ENCODE measurements at regions of chr11 and their contacts with region 1.

Region 1: GRCh38 chr11:78564490-78565467 is 9.9 kb downstream of the NARS2 start:
- DNase-seq: peak; percentile 31
- H3K4me3 Mint-ChIP-seq: no peak overlapping the region
- H3K27ac Mint-ChIP-seq: peak overlapping the region; percentile 81
- H3K4me1 Mint-ChIP-seq: peaks cover 50% of the 10 kb centered on the region
- H3K27me3 Mint-ChIP-seq: no peaks in the 10 kb centered on the region

Region 2: DNA sequence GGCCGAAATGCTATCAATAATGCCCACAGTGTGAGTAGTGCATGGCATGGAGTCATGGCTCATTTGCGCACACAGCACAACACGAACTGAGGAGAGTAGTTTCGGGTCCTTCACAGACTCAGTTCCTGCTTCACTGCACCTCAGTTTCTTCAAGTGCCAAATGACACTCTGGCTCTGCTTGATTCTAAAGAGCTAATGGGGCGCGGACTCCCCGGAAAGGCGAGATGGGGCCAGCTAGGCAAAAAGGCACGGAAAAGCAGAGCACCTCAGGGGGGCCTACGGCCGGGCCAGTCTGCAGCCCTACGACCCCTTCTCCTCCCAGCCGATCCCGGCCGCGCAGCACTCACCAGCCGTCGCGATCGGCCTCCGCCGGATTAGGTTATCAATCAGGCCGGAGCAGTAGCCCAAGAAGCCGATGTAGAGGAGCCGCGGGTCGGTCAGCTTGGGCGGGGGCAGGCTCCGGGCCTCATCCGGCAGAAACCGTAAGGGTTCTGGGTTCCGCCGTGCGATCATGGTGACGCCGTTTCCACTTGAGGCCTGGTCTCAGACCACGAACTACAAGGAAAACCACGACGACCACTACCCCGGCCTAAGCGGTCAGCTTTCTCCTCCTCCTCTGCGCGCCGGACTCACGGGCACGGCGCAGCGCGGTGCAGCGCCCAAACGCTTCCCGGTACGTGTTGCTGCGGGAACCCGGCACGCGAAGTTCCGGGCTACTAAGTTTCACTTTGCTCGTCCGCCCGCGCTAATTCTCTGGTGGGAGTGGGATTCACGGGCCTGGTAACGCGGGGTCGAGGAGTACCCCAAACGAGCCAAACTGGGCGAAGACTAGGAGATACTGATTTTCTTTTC is 485.3 kb before region 1 on chr11 and contains the start of gene NDUFC2:
- intact Hi-C with region 1: loop called (anchors 10 kb)
- DNase-seq: peak; percentile 62
- H3K4me3 Mint-ChIP-seq: peak within 1 kb of the TSS; percentile 95
- H3K27ac Mint-ChIP-seq: peak within 1 kb of the TSS; percentile 86
- H3K4me1 Mint-ChIP-seq: peaks cover 53% of the 10 kb centered on the region
- H3K27me3 Mint-ChIP-seq: no peaks in the 10 kb centered on the region
- total RNA-seq, gene NDUFC2: 208 and 220 TPM in 2 replicates

Region 3: GRCh38 chr11:78139422-78140391 is 425.1 kb before region 1 on chr11 and contains the start of gene ALG8:
- intact Hi-C with region 1: loop called (anchors 2 kb)
- DNase-seq: peak; percentile 96
- H3K4me3 Mint-ChIP-seq: peak within 1 kb of the TSS; percentile 95
- H3K27ac Mint-ChIP-seq: peak within 1 kb of the TSS; percentile 90
- H3K4me1 Mint-ChIP-seq: peaks cover 43% of the 10 kb centered on the region
- H3K27me3 Mint-ChIP-seq: no peaks in the 10 kb centered on the region
- total RNA-seq, gene ALG8: 57.9 and 74.2 TPM in 2 replicates

Region 4: DNA sequence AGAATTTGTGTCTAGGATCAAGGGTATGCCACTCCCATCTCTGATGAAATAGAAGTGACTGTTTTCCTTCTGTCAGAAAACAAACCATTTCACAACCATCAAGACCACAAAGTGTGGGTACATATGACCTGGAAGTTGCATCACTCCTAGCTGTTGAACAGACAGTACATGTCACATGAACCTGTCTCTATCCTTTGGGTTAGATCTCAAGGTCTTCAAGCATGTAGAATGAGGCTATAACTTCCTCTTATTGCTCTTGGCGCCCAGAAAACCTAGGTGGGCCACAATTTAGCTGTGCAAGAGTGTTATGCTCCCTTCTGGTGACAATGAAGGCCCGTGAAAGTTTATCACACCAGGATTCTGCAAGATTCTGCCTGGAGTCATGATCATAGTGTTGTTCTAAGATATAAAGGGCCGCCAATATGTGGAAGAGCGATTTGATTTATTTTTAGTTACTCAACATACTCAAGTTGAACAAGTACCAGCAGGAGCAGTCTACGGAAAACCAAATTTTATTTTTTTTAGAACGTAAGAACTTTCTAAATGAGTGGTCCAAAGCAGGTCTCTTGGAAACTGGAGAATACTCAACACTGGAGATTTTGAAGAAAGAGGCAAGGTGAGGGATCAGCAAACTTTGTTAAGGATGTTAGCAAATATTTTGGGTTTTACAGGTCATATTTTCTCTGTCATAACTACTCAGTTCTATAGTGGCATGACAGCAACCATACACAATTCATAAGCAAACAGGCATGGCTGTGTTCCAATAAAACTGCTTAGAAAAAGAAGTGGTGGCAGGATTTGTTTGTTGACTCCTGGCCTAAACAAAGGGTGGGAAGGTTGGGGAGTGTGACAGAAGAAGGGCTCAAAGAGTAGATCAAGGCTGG is 274.2 kb before region 1 on chr11:
- intact Hi-C with region 1: loop called (anchors 5 kb)
- DNase-seq: peak; percentile 54
- H3K4me3 Mint-ChIP-seq: peak overlapping the region; percentile 73
- H3K27ac Mint-ChIP-seq: peak overlapping the region; percentile 92
- H3K4me1 Mint-ChIP-seq: peaks cover 68% of the 10 kb centered on the region
- H3K27me3 Mint-ChIP-seq: no peaks in the 10 kb centered on the region

Region 5: GRCh38 chr11:78350646-78351165 is 214.1 kb before region 1 on chr11:
- intact Hi-C with region 1: loop called (anchors 5 kb)
- DNase-seq: no peak
- H3K4me3 Mint-ChIP-seq: peak overlapping the region; percentile 60
- H3K27ac Mint-ChIP-seq: peak overlapping the region; percentile 92
- H3K4me1 Mint-ChIP-seq: peaks cover 75% of the 10 kb centered on the region
- H3K27me3 Mint-ChIP-seq: peaks cover 5% of the 10 kb centered on the region

Region 6: GRCh38 chr11:78476066-78476465 is 88.7 kb before region 1 on chr11:
- intact Hi-C with region 1: no loop called
- DNase-seq: no peak
- H3K4me3 Mint-ChIP-seq: no peak overlapping the region
- H3K27ac Mint-ChIP-seq: no peak overlapping the region
- H3K4me1 Mint-ChIP-seq: no peaks in the 10 kb centered on the region
- H3K27me3 Mint-ChIP-seq: no peaks in the 10 kb centered on the region

Region 7: GRCh38 chr11:78586452-78587046 is 21.8 kb after region 1 on chr11:
- intact Hi-C with region 1: no loop called
- DNase-seq: no peak
- H3K4me3 Mint-ChIP-seq: no peak overlapping the region
- H3K27ac Mint-ChIP-seq: no peak overlapping the region
- H3K4me1 Mint-ChIP-seq: no peaks in the 10 kb centered on the region
- H3K27me3 Mint-ChIP-seq: peaks cover 16% of the 10 kb centered on the region

Region 8: GRCh38 chr11:78645226-78646202 is 80.7 kb after region 1 on chr11:
- intact Hi-C with region 1: loop called (anchors 5 kb)
- DNase-seq: peak; percentile 35
- H3K4me3 Mint-ChIP-seq: no peak overlapping the region
- H3K27ac Mint-ChIP-seq: peak overlapping the region; percentile 69
- H3K4me1 Mint-ChIP-seq: peaks cover 35% of the 10 kb centered on the region
- H3K27me3 Mint-ChIP-seq: no peaks in the 10 kb centered on the region